ENCODE measurements at regions of chr6 and their contacts with region 1.

Region 1: DNA sequence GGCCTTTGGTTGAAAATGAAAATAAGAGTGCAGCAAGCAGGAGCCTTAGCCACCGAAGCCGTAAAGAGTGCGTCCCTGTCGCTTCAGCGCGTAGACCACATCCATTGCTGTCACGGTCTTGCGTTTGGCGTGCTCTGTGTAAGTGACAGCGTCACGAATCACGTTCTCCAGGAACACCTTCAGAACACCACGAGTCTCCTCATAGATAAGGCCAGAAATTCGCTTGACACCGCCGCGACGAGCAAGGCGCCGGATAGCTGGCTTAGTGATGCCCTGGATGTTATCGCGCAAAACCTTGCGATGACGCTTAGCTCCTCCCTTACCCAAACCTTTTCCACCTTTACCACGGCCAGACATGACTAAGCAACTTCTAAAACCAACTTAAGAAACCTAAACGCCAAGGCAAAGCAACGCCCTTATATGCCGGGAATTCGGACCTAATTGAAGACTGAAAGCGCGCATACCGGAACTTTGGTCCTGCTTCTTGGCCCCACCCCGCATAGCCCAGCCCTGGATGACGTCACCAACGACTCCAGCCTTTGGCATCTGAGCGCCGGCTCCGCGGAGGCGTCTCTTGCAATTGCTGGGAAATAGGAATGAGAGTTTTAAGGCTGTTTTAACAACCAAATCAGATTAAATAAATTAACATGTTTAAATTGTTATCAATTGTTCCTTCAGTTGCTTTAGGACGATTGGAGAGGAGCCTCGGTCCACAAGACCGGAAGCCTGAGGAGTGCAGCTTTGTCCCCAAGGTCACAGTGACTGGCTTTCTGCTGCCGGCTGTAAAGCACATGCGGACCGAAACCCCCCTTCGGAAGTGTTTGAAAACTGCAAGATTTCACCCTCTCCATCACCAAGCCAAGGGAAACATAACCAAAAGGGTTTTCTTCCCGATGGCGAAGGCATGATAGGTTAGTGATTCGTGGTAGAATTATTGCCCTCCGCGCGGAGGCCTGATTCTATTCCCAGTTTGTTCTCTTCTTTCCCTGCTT is 79.6 kb upstream of the BTN3A2 start:
- DNase-seq: peak; percentile 96
- ATAC-seq: peak; percentile 91 to 92
- H3K4me3 ChIP-seq: peak overlapping the region; percentile 50 to 84 (median 73)
- H3K27ac ChIP-seq: peak overlapping the region; percentile 91 to 92 (median 92)
- H3K4me1 ChIP-seq: peaks cover 17 to 28% of the 10 kb centered on the region in 2 donors
- H3K27me3 ChIP-seq: no peaks in the 10 kb centered on the region
- CTCF ChIP-seq: no peak
- POLR2A ChIP-seq: peak; percentile 66 to 72

Region 2: DNA sequence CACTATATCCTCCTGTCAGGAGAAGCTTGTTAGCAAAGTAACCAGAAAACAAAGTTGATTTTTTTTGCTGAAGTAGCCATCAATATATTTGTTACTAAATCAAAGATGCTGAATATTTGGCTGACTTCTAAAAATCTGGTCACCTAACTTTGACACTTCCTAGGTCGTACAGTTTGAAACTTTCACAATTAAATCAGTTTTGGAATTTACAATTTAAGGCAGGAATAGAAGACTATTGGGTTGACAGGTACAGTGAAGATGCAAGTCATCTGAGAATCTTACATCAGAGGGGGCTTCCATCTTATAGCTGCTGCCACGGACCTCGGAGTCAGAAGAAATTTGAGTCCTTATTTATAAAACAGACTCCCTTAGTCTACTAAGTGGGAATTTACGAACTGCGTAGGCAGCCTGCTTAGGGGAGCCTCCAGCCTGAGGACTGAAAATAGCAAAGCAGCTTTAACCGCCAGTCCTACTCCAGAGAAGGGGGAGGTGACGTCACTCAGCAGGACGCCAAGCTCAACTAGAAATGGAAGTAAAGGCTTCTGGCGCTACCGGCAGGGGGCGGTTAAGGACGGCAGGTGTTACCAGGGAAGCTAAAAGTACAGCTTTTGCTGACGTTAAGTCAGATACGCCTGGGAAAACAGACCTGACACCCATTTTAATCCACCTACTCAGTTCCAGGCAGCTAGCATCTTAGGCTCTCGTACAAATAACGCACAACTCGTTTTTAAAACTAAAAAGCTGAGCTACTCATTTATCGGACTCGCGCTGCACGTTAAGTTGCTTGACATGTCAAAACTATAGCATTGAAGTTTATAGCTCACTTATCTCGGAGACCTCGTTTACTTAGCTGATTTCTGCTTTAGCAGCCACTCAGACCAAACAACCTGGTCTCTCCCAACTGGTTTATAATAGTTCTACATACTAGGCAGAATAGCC is 259.3 kb before region 1 on chr6:
- in situ Hi-C with region 1: loop called in 1 of 4 experiments (anchors 25 kb)
- intact Hi-C with region 1: loop called (anchors 10 kb)
- DNase-seq: peak; percentile 86 to 87
- ATAC-seq: peak; percentile 60 to 72
- H3K4me3 ChIP-seq: peak overlapping the region; percentile 46 to 65 (median 62)
- H3K27ac ChIP-seq: peak overlapping the region; percentile 80 to 88 (median 83)
- H3K4me1 ChIP-seq: peaks cover 0 to 15% of the 10 kb centered on the region in 2 donors
- H3K27me3 ChIP-seq: peaks cover 7 to 67% (median 13%) of the 10 kb centered on the region in 3 donors
- CTCF ChIP-seq: peak; percentile 50 to 75 (median 73)
- POLR2A ChIP-seq: peak; percentile 7

Region 3: GRCh38 chr6:26122793-26123674 is 162.4 kb before region 1 on chr6:
- in situ Hi-C with region 1: no loop called
- intact Hi-C with region 1: loop called (anchors 1 kb)
- DNase-seq: peak; percentile 96 to 98
- ATAC-seq: peak; percentile 84 to 85
- H3K4me3 ChIP-seq: peak overlapping the region; percentile 77 to 96 (median 90)
- H3K27ac ChIP-seq: peak overlapping the region; percentile 94 to 98 (median 95)
- H3K4me1 ChIP-seq: peaks cover 18 to 26% of the 10 kb centered on the region in 2 donors
- H3K27me3 ChIP-seq: no peaks in the 10 kb centered on the region
- CTCF ChIP-seq: no peak
- POLR2A ChIP-seq: peak; percentile 43 to 47

Region 4: DNA sequence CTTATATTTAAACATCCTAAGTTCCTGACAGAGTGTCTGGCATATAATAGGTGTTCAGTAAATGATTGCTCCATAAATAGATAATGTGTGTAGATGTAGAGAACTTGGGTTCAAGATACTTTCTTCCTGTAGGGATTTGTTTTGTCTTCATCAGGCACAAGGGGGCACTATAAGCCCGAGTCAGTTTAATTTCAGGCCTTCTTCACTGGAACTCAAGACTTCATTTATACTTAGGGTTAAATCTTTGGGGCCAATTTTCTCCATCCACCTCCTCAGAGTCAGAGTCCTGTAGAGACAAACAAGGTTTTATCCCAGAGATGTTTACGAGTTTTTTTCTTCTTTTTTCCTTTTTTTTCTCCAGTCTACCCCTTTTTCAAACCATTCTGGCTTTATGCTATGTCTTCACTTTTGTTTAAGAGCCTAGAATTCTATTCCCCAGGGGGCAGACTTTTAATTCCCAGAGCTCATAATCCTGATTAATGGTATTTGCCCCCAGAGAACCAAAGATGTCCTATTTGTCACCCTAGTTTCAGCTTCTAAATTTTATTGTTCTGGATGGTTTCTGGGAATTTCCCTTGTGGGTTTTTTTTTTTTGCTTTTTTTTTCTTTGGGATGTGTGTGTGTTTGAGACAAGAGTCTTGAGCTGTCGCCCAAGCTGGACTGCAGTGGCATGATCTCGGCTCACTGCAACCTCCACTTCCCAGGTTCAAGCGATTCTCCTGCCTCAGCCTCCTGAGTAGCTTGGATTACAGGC is 109.8 kb before region 1 on chr6:
- in situ Hi-C with region 1: no loop called
- intact Hi-C with region 1: loop called (anchors 5 kb)
- DNase-seq: no peak
- ATAC-seq: no peak
- H3K4me3 ChIP-seq: no peak overlapping the region
- H3K27ac ChIP-seq: no peak overlapping the region
- H3K4me1 ChIP-seq: peaks cover 4 to 6% of the 10 kb centered on the region in 2 donors
- H3K27me3 ChIP-seq: no peaks in the 10 kb centered on the region
- CTCF ChIP-seq: peak in 3 of 5 experiments; percentile 17 to 58 (median 51)
- POLR2A ChIP-seq: no peak

Region 5: GRCh38 chr6:26520853-26521599 is 235.6 kb after region 1 on chr6:
- in situ Hi-C with region 1: no loop called
- intact Hi-C with region 1: loop called (anchors 5 kb)
- DNase-seq: peak; percentile 75 to 84
- ATAC-seq: peak; percentile 83 to 86
- H3K4me3 ChIP-seq: peak overlapping the region; percentile 66 to 84 (median 76)
- H3K27ac ChIP-seq: peak overlapping the region; percentile 90 to 98 (median 98)
- H3K4me1 ChIP-seq: peaks cover 16 to 29% of the 10 kb centered on the region in 2 donors
- H3K27me3 ChIP-seq: no peaks in the 10 kb centered on the region
- CTCF ChIP-seq: no peak
- POLR2A ChIP-seq: peak in 1 of 2 donors; percentile 3

Region 6: DNA sequence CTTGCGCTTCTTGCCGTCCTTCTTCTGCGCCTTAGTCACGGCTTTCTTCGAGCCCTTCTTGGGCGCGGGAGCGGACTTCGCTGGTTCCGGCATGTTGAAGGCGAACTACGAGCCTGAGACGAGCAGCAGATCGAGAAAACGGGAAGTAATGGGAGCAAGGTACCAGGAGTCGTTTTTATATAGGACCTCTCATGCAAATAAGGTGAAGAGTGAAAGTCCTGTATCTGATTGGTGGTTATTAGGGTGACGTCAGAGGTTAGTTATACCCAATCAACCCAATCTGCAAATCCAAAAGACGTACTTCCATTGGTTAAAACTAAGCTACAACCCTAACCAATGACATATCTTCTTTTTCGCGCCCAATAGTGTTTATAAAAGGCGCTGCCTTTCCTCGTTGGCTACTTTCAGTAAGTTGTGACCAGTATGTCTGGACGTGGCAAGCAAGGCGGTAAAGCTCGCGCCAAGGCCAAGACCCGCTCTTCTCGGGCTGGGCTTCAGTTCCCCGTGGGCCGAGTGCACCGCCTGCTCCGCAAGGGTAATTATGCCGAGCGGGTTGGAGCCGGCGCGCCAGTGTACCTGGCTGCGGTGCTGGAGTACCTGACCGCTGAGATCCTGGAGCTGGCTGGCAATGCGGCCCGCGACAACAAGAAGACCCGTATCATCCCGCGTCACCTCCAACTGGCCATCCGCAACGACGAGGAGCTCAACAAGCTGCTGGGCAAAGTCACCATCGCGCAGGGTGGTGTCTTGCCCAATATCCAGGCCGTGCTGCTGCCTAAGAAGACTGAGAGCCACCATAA is 861.5 kb after region 1 on chr6:
- in situ Hi-C with region 1: loop called in 1 of 4 experiments (anchors 25 kb)
- intact Hi-C with region 1: loop called (anchors 2 kb)
- DNase-seq: peak; percentile 49 to 56
- ATAC-seq: peak; percentile 98 to 99
- H3K4me3 ChIP-seq: peak overlapping the region; percentile 60 to 65 (median 62)
- H3K27ac ChIP-seq: peak overlapping the region; percentile 71 to 83 (median 78)
- H3K4me1 ChIP-seq: peaks cover 0 to 7% of the 10 kb centered on the region in 2 donors
- H3K27me3 ChIP-seq: peaks cover 20 to 35% (median 23%) of the 10 kb centered on the region in 3 donors
- CTCF ChIP-seq: no peak
- POLR2A ChIP-seq: peak; percentile 73 to 81

Measured in gastrocnemius medialis (tissue), 4 donors.